CD8-positive, alpha-beta memory T cell (primary cell): ENCODE measurements at regions of chr20 and their contacts with region 1.

Region 1: DNA sequence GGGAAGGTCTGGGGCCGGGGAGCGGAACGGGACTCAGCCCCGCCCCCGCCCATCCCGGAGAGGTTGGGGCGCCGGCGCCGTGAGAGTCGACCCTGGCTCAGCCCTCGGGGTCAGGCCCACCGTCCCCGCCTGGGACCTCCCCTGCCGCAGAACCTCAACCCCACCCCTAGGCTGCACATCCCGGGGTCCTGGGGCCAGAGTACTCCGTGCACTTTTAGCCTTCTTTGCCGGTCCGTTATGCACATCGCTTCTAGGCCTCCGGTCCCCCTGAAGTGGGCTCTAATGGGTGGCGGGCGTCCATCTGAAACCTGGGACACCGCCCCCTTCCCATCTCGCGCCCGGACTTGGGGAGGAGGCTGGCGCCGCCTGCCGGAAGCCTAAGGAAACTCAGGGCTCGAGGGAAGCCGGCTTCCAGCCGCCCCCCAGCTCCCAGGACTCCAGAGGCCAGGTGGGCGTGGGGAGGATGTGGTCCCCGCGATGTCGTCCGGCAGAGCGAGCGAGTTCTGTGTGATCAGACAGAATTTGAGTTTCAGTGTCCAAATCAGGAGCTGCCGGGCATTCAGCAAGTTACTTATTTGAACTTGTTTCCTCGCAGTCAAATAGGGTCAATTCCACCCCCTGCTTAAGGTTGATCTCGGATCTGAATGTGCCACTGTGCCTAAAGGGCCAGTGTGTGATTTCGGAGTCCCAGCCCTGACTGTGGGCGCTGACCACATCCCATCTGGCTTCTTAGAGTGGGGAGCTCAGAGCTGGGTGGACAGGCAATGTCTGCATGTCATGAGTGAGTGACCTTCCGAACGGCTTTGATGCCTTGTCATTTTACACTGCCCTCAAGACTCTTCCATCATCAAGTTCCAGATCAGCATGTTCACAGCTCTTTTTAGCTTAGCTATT is 47.6 kb downstream of the CPXM1 start:
- DNase-seq: peak in 4 of 5 donors; percentile 42 to 70 (median 52)
- H3K4me3 ChIP-seq: peak overlapping the region; percentile 63
- H3K4me3 Mint-ChIP-seq: peak overlapping the region; percentile 81 to 91 (median 87)
- H3K27ac ChIP-seq: no peak overlapping the region
- H3K27ac Mint-ChIP-seq: peak overlapping the region in 6 of 8 donors; percentile 12 to 86 (median 73)
- H3K4me1 ChIP-seq: peaks cover 26% of the 10 kb centered on the region
- H3K4me1 Mint-ChIP-seq: peaks cover 31 to 33% (median 32%) of the 10 kb centered on the region in 3 donors
- H3K27me3 ChIP-seq: peaks cover 4% of the 10 kb centered on the region
- H3K27me3 Mint-ChIP-seq: peaks cover 11 to 14% of the 10 kb centered on the region in 2 donors

Region 2: GRCh38 chr20:2416541-2417212 is 336.1 kb before region 1 on chr20:
- CTCF ChIA-PET with region 1: no interaction called
- POLR2A ChIA-PET with region 1: no interaction called
- DNase-seq: no peak
- H3K4me3 ChIP-seq: no peak overlapping the region
- H3K4me3 Mint-ChIP-seq: no peak overlapping the region
- H3K27ac ChIP-seq: no peak overlapping the region
- H3K27ac Mint-ChIP-seq: peak overlapping the region in 1 of 8 donors; percentile 9
- H3K4me1 ChIP-seq: no peaks in the 10 kb centered on the region
- H3K4me1 Mint-ChIP-seq: no peaks in the 10 kb centered on the region
- H3K27me3 ChIP-seq: peaks cover 2% of the 10 kb centered on the region
- H3K27me3 Mint-ChIP-seq: peaks cover 5 to 39% of the 10 kb centered on the region in 2 donors

Region 3: GRCh38 chr20:2729251-2729713 is 23.5 kb before region 1 on chr20:
- CTCF ChIA-PET with region 1: interaction called, 18 read pairs
- POLR2A ChIA-PET with region 1: no interaction called
- DNase-seq: peak in 3 of 5 donors; percentile 54 to 71 (median 64)
- H3K4me3 ChIP-seq: peak overlapping the region; percentile 4
- H3K4me3 Mint-ChIP-seq: peak overlapping the region in 6 of 7 donors; percentile 51 to 71 (median 65)
- H3K27ac ChIP-seq: no peak overlapping the region
- H3K27ac Mint-ChIP-seq: peak overlapping the region; percentile 16 to 96 (median 90)
- H3K4me1 ChIP-seq: peaks cover 28% of the 10 kb centered on the region
- H3K4me1 Mint-ChIP-seq: peaks cover 21 to 28% (median 28%) of the 10 kb centered on the region in 3 donors
- H3K27me3 ChIP-seq: no peaks in the 10 kb centered on the region
- H3K27me3 Mint-ChIP-seq: peaks cover 3 to 13% of the 10 kb centered on the region in 2 donors

Region 4: GRCh38 chr20:2734899-2735298 is 17.9 kb before region 1 on chr20:
- CTCF ChIA-PET with region 1: interaction called, 18 read pairs
- POLR2A ChIA-PET with region 1: no interaction called
- DNase-seq: no peak
- H3K4me3 ChIP-seq: no peak overlapping the region
- H3K4me3 Mint-ChIP-seq: no peak overlapping the region
- H3K27ac ChIP-seq: no peak overlapping the region
- H3K27ac Mint-ChIP-seq: peak overlapping the region in 1 of 8 donors; percentile 37
- H3K4me1 ChIP-seq: peaks cover 25% of the 10 kb centered on the region
- H3K4me1 Mint-ChIP-seq: peaks cover 19 to 25% (median 22%) of the 10 kb centered on the region in 3 donors
- H3K27me3 ChIP-seq: peaks cover 6% of the 10 kb centered on the region
- H3K27me3 Mint-ChIP-seq: peaks cover 0 to 2% of the 10 kb centered on the region in 2 donors